AG04449 (cell line): ENCODE measurements at regions of chr5 and their contacts with region 1.

Region 1: DNA sequence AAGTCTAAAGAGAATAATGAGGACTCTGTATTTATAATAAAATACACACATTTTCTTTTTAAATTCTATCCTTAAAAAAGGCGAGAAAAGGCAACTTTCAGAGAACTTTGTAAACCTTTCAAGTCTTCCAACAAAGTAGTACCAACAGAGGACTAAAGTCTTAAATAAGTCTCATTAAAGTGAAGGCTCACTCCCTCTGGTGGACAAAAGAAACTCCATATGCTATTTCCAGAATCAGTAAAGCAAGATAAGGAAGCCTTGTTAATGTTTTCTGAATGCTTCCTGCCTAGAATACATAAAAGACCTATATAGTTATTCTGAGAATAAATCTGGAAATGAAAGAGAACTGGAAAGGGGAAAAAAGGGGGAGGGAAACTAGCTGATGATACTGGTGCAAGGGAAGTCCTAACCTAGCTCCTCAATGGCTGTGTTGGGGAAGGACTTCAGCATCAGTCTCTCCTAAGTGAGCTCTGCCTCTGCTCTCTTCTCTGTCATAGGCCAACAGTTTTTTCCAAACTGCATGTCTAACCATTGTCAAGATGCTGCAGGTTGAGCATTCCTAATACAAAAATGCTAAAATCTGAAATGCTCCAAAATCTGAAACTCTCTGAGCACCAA is 7.2 kb downstream of the HMGCS1 start:
- DNase-seq: peak; percentile 31
- H3K4me3 ChIP-seq: no peak overlapping the region
- CTCF ChIP-seq: peak; percentile 50

Region 2: GRCh38 chr5:43215073-43215631 is 90.9 kb before region 1 on chr5:
- CTCF ChIA-PET with region 1: no interaction called
- POLR2A ChIA-PET with region 1: no interaction called
- DNase-seq: no peak
- H3K4me3 ChIP-seq: no peak overlapping the region
- CTCF ChIP-seq: no peak

Region 3: GRCh38 chr5:43294226-43294625 is 11.8 kb before region 1 on chr5:
- CTCF ChIA-PET with region 1: interaction called, 18 read pairs
- POLR2A ChIA-PET with region 1: no interaction called
- DNase-seq: peak; percentile 17
- H3K4me3 ChIP-seq: no peak overlapping the region
- CTCF ChIP-seq: no peak

Region 4: DNA sequence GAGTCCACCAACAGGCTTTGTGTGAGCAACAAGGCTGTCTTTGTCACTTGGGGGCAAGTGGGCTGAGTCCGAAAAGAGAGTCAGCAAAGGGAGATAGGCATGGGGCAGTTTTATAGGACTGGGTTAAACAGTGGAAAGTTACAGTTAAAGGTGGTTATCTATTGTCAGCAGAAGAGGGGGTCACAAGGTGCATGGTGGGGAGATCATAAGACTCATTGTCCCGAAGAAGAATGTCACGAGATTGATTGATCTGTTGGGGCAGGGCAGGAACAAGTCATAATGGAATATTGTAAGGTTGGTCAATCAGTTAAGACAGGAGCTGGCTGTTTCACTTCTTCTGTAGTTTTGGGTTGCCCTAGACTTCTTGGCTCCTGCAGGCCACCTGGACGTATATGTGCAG is 14.8 kb after region 1 on chr5:
- CTCF ChIA-PET with region 1: no interaction called
- POLR2A ChIA-PET with region 1: no interaction called
- DNase-seq: no peak
- H3K4me3 ChIP-seq: no peak overlapping the region
- CTCF ChIP-seq: no peak